ENCODE measurements at regions of chr7 and their contacts with region 1.

Region 1: GRCh38 chr7:75866489-75867389 is 12.1 kb upstream of the RHBDD2 start:
- DNase-seq: no peak
- ATAC-seq: peak; percentile 69
- H3K4me3 Mint-ChIP-seq: no peak overlapping the region
- H3K27ac Mint-ChIP-seq: no peak overlapping the region
- H3K4me1 Mint-ChIP-seq: no peaks in the 10 kb centered on the region
- H3K27me3 Mint-ChIP-seq: peaks cover 16% of the 10 kb centered on the region
- CTCF ChIP-seq: no peak

Region 2: GRCh38 chr7:76020031-76020714 is 153.4 kb after region 1 on chr7:
- CTCF ChIA-PET with region 1: interaction called, 57 read pairs
- POLR2A ChIA-PET with region 1: interaction called, 6 read pairs
- intact Hi-C with region 1: no loop called
- DNase-seq: peak; percentile 52
- ATAC-seq: peak; percentile 64
- H3K4me3 Mint-ChIP-seq: no peak overlapping the region
- H3K27ac Mint-ChIP-seq: peak overlapping the region; percentile 24
- H3K4me1 Mint-ChIP-seq: peaks cover 16% of the 10 kb centered on the region
- H3K27me3 Mint-ChIP-seq: no peaks in the 10 kb centered on the region
- CTCF ChIP-seq: no peak

Measured in activated B cell treated with CpG ODN at 0.5 μM for 24 hours (primary cell).